Activated CD4-positive, alpha-beta T cell treated with anti-CD3 and anti-CD28 coated beads for 36 hours (primary cell): ENCODE measurements at regions of chr1 and their contacts with region 1.

Region 1: DNA sequence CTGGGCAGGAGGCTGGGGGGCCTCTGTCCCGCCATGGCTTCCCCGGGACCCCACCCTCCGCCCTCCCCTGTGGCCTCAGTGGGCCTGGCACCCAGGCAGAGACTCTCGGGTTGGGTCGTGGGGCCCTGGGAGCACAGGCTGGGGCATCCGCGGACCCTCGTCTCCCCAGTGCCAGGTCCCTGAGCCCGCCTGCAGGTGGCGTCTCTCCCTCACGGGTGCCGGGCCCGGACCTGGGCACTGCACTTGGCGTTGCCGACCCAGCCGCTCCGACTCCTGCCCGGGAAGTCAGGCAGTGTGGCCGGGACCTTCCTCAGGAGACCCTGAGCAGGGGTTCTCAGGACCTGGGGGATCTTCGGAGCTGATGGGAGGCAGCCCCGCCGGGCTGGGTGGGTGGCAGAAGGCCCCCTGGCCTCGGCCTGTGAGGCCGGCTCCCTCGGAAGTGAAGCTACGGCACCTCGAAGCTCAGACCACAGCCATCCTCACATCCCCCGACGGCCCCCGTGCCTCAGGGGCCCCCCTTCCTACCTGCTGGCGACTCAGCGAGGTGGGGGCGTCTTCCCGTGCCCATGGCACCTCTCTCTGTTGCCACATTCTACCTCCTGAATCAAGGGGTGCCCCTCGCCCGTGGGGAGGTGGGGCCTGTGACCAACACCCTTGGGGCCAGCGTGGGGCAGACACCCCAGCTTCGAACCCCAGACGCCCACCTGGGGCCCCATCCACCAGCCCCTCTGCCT is 6.4 kb upstream of the C1orf159 start:
- DNase-seq: peak; percentile 93
- ATAC-seq: peak; percentile 97
- H3K4me3 Mint-ChIP-seq: no peak overlapping the region
- H3K27ac Mint-ChIP-seq: no peak overlapping the region
- H3K4me1 Mint-ChIP-seq: no peaks in the 10 kb centered on the region
- H3K27me3 Mint-ChIP-seq: peaks cover 3% of the 10 kb centered on the region

Region 2: GRCh38 chr1:1033009-1033587 is 89.1 kb before region 1 on chr1:
- CTCF ChIA-PET with region 1: interaction called, 3 read pairs
- POLR2A ChIA-PET with region 1: no interaction called
- intact Hi-C with region 1: loop called in 1 of 2 experiments (anchors 1 kb)
- DNase-seq: peak; percentile 97
- ATAC-seq: peak; percentile 95
- H3K4me3 Mint-ChIP-seq: peak overlapping the region; percentile 33
- H3K27ac Mint-ChIP-seq: no peak overlapping the region
- H3K4me1 Mint-ChIP-seq: peaks cover 5% of the 10 kb centered on the region
- H3K27me3 Mint-ChIP-seq: peaks cover 18% of the 10 kb centered on the region

Region 3: DNA sequence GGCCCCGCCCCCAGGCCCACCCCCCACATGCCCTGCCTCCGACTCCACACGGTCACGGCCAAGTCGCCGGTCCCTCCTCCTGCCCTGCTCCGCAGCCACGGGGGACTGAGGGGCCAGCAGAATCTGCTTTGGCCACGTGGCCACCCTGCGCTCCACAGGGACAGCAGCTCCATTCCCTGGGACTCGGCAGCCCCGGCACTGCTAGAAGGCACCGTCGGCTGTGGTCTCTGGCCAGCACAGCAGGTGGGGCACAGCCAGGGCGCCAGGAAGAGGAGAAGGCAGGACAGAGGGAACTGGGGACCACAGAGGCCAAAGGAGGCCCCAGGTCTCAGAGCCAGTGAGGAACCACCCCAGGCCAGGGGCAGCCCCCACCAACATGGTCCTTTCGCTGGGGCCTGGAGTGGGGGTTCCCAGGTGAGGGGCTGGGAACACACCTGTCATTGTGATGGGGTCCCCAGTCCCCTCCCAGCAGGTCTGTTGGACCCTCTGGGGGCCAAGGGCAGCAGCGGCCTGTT is 76.6 kb after region 1 on chr1:
- CTCF ChIA-PET with region 1: no interaction called
- POLR2A ChIA-PET with region 1: no interaction called
- intact Hi-C with region 1: no loop called
- DNase-seq: no peak
- ATAC-seq: no peak
- H3K4me3 Mint-ChIP-seq: no peak overlapping the region
- H3K27ac Mint-ChIP-seq: no peak overlapping the region
- H3K4me1 Mint-ChIP-seq: peaks cover 14% of the 10 kb centered on the region
- H3K27me3 Mint-ChIP-seq: no peaks in the 10 kb centered on the region

Region 4: GRCh38 chr1:1217621-1218523 is 95.6 kb after region 1 on chr1:
- CTCF ChIA-PET with region 1: interaction called, 6 read pairs
- POLR2A ChIA-PET with region 1: no interaction called
- intact Hi-C with region 1: loop called in 1 of 2 experiments (anchors 2 kb)
- DNase-seq: peak; percentile 77
- ATAC-seq: peak; percentile 4
- H3K4me3 Mint-ChIP-seq: peak overlapping the region; percentile 66
- H3K27ac Mint-ChIP-seq: peak overlapping the region; percentile 92
- H3K4me1 Mint-ChIP-seq: peaks cover 49% of the 10 kb centered on the region
- H3K27me3 Mint-ChIP-seq: no peaks in the 10 kb centered on the region

Region 5: GRCh38 chr1:1250786-1251284 is 128.6 kb after region 1 on chr1:
- CTCF ChIA-PET with region 1: interaction called, 11 read pairs
- POLR2A ChIA-PET with region 1: no interaction called
- intact Hi-C with region 1: loop called (anchors 1 to 5 kb)
- DNase-seq: no peak
- ATAC-seq: peak; percentile 59
- H3K4me3 Mint-ChIP-seq: no peak overlapping the region
- H3K27ac Mint-ChIP-seq: peak overlapping the region; percentile 72
- H3K4me1 Mint-ChIP-seq: peaks cover 15% of the 10 kb centered on the region
- H3K27me3 Mint-ChIP-seq: peaks cover 4% of the 10 kb centered on the region

Region 6: GRCh38 chr1:1264868-1265272 is 142.6 kb after region 1 on chr1:
- CTCF ChIA-PET with region 1: interaction called, 7 read pairs
- POLR2A ChIA-PET with region 1: interaction called, 4 read pairs
- intact Hi-C with region 1: loop called in 1 of 2 experiments (anchors 5 kb)
- DNase-seq: peak; percentile 47
- ATAC-seq: no peak
- H3K4me3 Mint-ChIP-seq: no peak overlapping the region
- H3K27ac Mint-ChIP-seq: no peak overlapping the region
- H3K4me1 Mint-ChIP-seq: peaks cover 3% of the 10 kb centered on the region
- H3K27me3 Mint-ChIP-seq: no peaks in the 10 kb centered on the region

Region 7: GRCh38 chr1:1291548-1292441 is 169.6 kb after region 1 on chr1:
- CTCF ChIA-PET with region 1: interaction called, 9 read pairs
- POLR2A ChIA-PET with region 1: no interaction called
- intact Hi-C with region 1: loop called (anchors 1 to 5 kb)
- DNase-seq: peak; percentile 74
- ATAC-seq: peak; percentile 72
- H3K4me3 Mint-ChIP-seq: no peak overlapping the region
- H3K27ac Mint-ChIP-seq: no peak overlapping the region
- H3K4me1 Mint-ChIP-seq: no peaks in the 10 kb centered on the region
- H3K27me3 Mint-ChIP-seq: no peaks in the 10 kb centered on the region